Heart left ventricle (tissue), 16 donors: ENCODE measurements at regions of chr18 and their contacts with region 1.

Region 1: DNA sequence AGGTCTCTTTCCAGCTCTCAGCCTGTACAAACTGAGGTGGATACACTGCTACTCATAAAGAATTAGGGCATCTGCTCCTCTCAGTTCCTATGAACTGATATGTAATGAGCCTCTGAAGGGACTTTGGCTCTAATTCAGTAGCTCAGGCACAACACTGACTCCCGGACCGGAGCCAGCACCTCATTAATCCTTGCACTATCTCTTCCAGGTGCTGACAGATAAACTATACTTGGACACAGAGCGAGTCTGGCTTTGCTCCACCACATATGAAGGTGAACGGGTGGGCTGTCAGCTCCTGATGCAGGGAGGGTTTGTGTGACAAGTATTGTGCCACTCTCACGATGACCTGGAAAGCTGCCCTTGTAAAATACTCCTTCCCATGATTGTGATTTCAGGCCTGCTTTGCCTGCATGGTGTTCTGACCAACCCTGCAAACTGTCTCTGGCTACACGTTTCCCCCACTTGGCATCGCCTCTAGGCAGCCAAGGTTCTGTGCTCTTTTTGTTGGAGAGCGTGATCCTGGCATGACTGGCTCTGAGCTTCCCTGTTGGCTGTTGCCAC is 111.6 kb upstream of the LMAN1 start:
- DNase-seq: peak; percentile 36 to 85 (median 69)
- ATAC-seq: peak; percentile 83 to 88 (median 86)
- H3K4me3 ChIP-seq: no peak overlapping the region
- H3K27ac ChIP-seq: peak overlapping the region; percentile 49 to 88 (median 74)
- H3K4me1 ChIP-seq: peaks cover 0 to 20% (median 5%) of the 10 kb centered on the region in 12 donors
- H3K27me3 ChIP-seq: no peaks in the 10 kb centered on the region
- CTCF ChIP-seq: no peak
- POLR2A ChIP-seq: no peak

Region 2: GRCh38 chr18:59502274-59503175 is 31.9 kb after region 1 on chr18:
- intact Hi-C with region 1: loop called in 3 of 10 experiments (anchors 1 to 2 kb)
- DNase-seq: peak in 4 of 5 donors; percentile 33 to 66 (median 50)
- ATAC-seq: peak; percentile 88 to 95 (median 95)
- H3K4me3 ChIP-seq: no peak overlapping the region
- H3K27ac ChIP-seq: peak overlapping the region; percentile 6 to 89 (median 76)
- H3K4me1 ChIP-seq: peaks cover 0 to 29% (median 11%) of the 10 kb centered on the region in 12 donors
- H3K27me3 ChIP-seq: no peaks in the 10 kb centered on the region
- CTCF ChIP-seq: no peak
- POLR2A ChIP-seq: no peak

Region 3: DNA sequence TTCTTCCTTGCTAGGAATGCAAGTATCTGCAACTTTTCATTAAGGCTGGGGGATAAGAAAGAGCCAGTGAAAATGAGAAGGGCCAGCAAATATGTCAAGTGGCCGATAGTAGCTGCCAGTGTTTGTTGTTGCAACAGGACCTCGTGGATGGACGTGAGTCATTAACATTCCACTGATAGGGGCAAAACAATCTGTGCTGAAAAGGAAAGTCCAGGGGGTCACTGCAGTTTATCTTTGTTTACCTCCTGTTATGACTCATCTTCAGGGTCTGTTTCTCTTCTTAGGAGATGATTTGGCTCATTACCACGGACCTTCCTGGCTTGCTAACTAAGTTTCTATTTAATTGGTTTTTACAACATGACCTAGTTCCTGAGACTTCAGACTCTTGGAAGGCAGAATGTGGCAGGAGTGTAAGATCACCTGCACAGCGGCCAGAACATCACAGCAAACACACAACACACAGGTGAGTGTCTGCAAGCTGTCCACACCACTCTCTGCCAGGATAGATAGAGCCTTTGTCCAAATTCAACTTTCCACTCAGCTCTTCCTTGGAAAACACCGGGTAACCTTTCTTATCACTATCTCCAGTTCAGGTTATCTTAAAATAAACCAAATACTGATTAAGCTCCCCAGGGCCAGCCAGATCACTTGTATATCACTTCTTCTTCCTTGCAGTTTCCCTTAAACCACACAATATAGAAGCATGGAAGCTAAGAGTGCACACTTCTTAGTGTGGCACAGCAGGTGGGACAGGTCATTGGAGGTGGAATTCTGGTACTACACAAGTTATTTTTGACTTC is 45.9 kb after region 1 on chr18:
- intact Hi-C with region 1: loop called in 7 of 10 experiments (anchors 1 to 5 kb)
- DNase-seq: peak in 4 of 5 donors; percentile 52 to 67 (median 62)
- ATAC-seq: peak; percentile 89
- H3K4me3 ChIP-seq: no peak overlapping the region
- H3K27ac ChIP-seq: peak overlapping the region in 11 of 12 donors; percentile 15 to 89 (median 69)
- H3K4me1 ChIP-seq: peaks cover 0 to 46% (median 20%) of the 10 kb centered on the region in 12 donors
- H3K27me3 ChIP-seq: no peaks in the 10 kb centered on the region
- CTCF ChIP-seq: no peak
- POLR2A ChIP-seq: no peak

Region 4: GRCh38 chr18:59547581-59548182 is 77.0 kb after region 1 on chr18:
- intact Hi-C with region 1: loop called in 4 of 10 experiments (anchors 5 to 10 kb)
- DNase-seq: no peak
- ATAC-seq: peak in 2 of 4 donors; percentile 31 to 37
- H3K4me3 ChIP-seq: no peak overlapping the region
- H3K27ac ChIP-seq: no peak overlapping the region
- H3K4me1 ChIP-seq: peaks cover 0 to 17% (median 3%) of the 10 kb centered on the region in 12 donors
- H3K27me3 ChIP-seq: no peaks in the 10 kb centered on the region
- CTCF ChIP-seq: no peak
- POLR2A ChIP-seq: no peak

Region 5: DNA sequence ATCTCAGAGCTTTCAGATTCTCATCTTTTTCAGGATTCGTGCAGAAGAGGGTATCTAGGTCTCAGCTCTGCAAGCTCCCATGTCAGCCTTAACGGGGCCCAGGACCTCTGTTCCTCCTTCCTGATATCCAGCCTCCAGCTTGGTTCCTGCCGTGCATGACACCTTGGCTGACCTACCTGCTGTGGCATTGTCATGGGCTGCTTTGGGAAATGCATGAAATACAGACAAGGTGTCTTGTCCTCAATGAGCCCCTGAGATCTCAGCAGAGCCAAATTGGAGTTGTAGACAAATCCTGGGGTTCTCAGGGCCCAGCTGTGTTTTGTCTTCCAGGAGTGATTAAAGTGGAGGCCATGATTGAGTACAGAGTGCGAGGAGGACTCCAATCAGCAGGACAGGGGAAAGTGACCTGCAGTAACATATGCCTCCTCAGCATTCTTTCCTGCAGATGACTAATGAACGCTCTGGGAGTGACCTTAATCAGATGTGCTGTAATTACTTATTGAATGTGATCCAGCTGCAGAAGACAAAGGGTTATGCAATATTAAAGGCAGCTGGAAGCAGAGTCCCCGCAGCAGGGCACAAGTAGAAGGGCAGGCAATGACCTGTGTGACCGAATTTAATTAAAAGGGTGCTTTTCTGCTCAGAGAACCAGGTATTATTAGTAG is 85.5 kb after region 1 on chr18:
- intact Hi-C with region 1: loop called in 3 of 10 experiments (anchors 5 to 10 kb)
- DNase-seq: no peak
- ATAC-seq: peak in 2 of 4 donors; percentile 41 to 64
- H3K4me3 ChIP-seq: no peak overlapping the region
- H3K27ac ChIP-seq: no peak overlapping the region
- H3K4me1 ChIP-seq: peaks cover 0 to 12% (median 0%) of the 10 kb centered on the region in 12 donors
- H3K27me3 ChIP-seq: no peaks in the 10 kb centered on the region
- CTCF ChIP-seq: no peak
- POLR2A ChIP-seq: no peak

Region 6: DNA sequence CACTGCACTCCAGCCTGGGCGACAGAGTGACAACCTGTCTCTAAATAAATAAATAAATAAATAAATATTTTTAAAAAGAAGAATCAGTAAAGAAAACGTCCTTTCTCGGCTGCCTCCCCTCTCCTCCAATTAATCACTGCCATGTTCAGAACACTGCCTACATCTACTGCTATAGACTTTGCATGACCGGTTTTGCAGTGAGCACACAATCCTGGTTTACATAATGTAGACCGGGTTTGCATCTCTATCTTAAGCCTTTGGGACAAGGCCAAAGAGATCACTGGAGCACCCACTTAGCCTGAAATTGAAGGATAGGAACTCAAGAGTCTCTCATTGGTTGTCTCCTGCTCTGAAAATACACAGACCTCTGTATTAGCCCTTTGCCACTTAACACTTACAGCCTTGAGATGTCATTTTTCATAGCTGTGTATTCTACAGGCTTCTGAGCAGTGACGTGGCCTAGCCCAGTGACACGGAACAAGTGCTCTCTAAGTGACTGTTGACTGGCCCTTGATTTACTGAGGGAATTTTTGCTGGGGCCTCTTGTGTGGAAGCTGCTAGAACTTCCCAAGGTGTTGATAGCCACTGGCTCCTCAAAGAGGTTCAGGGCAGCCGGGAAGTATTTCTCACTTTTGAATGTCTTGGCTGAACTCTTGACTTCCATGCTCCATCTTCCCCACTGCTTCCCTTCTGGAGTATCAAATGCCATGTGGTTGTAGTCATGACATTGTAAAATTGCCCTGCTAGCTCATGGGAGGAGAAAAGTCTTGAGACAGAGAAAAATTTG is 271.9 kb after region 1 on chr18:
- intact Hi-C with region 1: loop called in 1 of 10 experiments (anchors 2 kb)
- DNase-seq: peak in 2 of 5 donors; percentile 47 to 48
- ATAC-seq: peak; percentile 47 to 98 (median 78)
- H3K4me3 ChIP-seq: no peak overlapping the region
- H3K27ac ChIP-seq: no peak overlapping the region
- H3K4me1 ChIP-seq: peaks cover 0 to 3% (median 0%) of the 10 kb centered on the region in 12 donors
- H3K27me3 ChIP-seq: no peaks in the 10 kb centered on the region
- CTCF ChIP-seq: no peak
- POLR2A ChIP-seq: no peak